Activated CD4-positive, alpha-beta memory T cell treated with anti-CD3 and anti-CD28 coated beads, Interleukin-2, amount 10 ng/mL, durations not matched to agents 7 days and 5 days (primary cell): ENCODE measurements at regions of chr9 and their contacts with region 1.

Region 1: DNA sequence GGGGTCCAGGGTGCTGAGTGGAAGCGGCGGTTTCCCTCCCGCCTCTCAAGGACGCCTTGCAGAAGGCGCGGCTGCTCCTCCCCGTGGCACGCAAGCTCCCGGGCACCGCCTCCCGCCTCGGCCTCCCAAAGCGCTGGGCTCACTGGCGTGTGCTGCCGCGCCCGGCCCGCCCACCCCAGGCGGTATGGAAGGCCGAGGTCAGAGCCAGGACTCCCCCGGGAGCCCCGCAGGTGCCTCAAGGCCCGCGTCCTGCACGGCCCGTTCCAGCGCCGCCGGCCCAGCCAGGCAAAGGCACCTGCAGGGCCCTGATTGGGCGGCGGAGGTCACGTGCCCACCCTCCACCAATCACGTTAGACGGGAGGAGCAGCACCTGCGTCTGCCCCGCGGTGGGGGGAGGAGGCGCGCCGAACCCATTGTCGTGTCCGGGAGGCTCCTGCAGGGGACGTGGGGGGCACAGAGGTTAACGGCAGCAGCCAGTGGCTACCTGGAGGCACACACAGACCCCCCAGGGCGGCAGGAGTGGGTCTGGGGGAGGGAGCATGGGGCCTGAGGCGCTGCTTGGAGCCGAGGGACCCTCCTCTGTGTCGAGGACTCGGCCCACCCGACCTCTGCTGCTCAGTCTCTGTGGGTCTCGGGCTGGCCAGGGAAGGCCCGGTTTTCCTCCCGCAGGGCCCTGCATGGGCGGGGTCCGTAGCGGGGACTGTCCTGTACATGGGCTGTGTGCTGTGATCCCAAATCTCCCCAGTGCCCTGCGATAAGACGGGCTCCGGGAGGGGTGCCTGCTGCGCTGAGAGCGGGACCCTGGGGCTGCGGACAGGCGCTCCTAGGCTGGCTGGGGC is 2.0 kb upstream of the LCN12 start:
- DNase-seq: peak; percentile 98
- H3K4me3 Mint-ChIP-seq: peak overlapping the region; percentile 81
- H3K27ac Mint-ChIP-seq: peak overlapping the region; percentile 79
- H3K4me1 Mint-ChIP-seq: peaks cover 12% of the 10 kb centered on the region
- H3K27me3 Mint-ChIP-seq: no peaks in the 10 kb centered on the region

Region 2: GRCh38 chr9:136978073-136978864 is 28.2 kb after region 1 on chr9:
- CTCF ChIA-PET with region 1: interaction called, 27 read pairs
- POLR2A ChIA-PET with region 1: interaction called, 10 read pairs
- DNase-seq: peak; percentile 83
- H3K4me3 Mint-ChIP-seq: no peak overlapping the region
- H3K27ac Mint-ChIP-seq: no peak overlapping the region
- H3K4me1 Mint-ChIP-seq: peaks cover 33% of the 10 kb centered on the region
- H3K27me3 Mint-ChIP-seq: peaks cover 1% of the 10 kb centered on the region

Region 3: GRCh38 chr9:137114220-137114609 is 164.2 kb after region 1 on chr9:
- CTCF ChIA-PET with region 1: no interaction called
- POLR2A ChIA-PET with region 1: no interaction called
- DNase-seq: peak; percentile 28
- H3K4me3 Mint-ChIP-seq: peak overlapping the region; percentile 65
- H3K27ac Mint-ChIP-seq: peak overlapping the region; percentile 56
- H3K4me1 Mint-ChIP-seq: peaks cover 5% of the 10 kb centered on the region
- H3K27me3 Mint-ChIP-seq: no peaks in the 10 kb centered on the region